ENCODE measurements at regions of chr1 and their contacts with region 1.

Region 1: DNA sequence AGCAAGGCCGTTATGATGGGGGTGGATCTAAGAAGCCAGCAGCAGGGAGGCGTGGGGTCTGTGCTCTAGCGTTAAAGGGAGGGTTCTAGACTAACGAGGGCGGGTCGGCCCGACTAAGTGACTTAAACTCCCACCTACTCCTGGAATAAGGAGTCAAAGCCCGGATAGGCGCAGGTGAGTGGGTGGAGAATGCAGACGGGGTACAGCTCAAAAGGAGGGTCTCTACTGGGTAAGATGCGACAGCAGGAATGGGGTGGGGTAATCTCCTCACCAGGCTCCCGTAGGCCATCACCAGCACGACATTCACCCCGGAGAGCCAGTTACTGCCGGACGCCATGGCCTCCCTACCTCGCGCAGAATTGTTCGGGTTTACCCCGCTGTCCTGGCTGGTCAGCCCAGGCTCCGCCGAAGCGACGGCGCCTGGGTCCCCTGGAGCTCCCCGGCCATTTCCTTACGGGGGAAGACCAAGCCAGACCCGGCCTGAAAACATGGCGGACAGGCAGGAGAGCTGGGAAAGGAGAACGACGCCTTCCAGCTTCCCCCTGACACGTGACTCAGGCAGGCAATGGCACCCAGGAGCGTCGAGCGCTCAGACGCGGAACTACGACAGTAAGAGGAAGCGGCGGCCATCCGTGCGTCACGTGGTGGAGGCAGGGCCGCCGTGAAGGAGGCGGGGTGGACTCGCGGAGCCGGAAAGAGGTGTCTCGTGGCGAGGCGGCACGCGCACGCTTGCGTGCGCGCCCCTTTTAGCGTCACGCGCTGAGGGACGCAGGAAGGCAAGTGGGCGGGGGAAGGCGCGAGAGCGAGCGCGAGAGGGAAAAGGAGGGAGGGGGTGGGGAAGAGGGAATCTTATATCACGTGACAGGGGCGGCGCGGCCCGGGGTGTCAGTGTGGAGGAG is at the start of gene UBAP2L:
- DNase-seq: peak; percentile 99
- ATAC-seq: peak; percentile 92
- H3K4me3 Mint-ChIP-seq: peak within 1 kb of the TSS; percentile 99
- H3K27ac Mint-ChIP-seq: peak within 1 kb of the TSS; percentile 100
- H3K4me1 Mint-ChIP-seq: peaks cover 70% of the 10 kb centered on the region
- H3K27me3 Mint-ChIP-seq: no peaks in the 10 kb centered on the region
- total RNA-seq, gene UBAP2L: 205 to 255 TPM

Region 2: DNA sequence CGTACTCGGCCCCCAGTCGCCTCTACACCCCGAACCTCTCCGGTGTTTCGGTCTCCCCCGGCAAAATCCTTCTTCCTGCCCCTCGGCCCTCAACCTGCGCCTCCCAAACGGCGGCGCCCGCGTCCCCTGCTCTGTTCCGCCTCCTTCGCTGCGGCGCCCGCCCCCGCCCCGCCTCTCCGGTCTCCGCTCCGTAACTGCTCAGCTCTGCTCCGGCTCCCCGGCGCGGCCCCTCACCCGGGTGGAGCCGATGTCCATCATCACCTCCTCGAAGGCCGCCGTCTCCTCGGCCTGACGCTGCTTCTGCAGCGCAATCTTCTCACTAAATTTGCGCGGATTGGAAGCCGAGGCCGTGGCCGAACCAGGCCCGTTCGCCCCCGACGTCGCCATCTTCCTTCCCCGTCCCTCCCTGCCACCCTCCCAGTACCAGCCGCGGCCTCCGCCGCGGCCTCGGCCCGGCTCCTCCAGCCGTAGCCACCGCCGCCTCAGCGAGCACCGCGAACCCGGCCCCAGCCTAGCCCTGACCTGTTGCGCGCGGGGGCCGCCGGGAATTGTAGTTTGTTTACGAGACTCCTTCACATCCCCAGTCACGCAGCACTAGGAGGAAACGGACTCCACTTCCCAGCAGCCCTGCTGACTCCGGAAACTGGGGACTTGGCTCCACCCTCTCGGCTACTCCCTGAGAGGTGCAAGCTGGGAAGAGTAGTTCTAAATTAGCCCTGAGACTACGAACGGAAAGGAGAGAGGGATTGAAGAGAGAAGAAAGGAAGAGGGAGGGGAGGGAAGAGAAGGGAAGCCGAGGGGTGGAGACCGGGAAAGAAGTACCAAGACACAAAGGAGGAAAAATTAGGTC is 262.0 kb before region 1 on chr1 and contains the start of gene CRTC2:
- CTCF ChIA-PET with region 1: no interaction called
- POLR2A ChIA-PET with region 1: no interaction called
- intact Hi-C with region 1: loop called in 1 of 2 experiments (anchors 1 kb)
- DNase-seq: peak; percentile 99
- ATAC-seq: peak; percentile 90
- H3K4me3 Mint-ChIP-seq: peak within 1 kb of the TSS; percentile 99
- H3K27ac Mint-ChIP-seq: peak within 1 kb of the TSS; percentile 95
- H3K4me1 Mint-ChIP-seq: peaks cover 55% of the 10 kb centered on the region
- H3K27me3 Mint-ChIP-seq: no peaks in the 10 kb centered on the region
- total RNA-seq, gene CRTC2: 60.6 to 80.4 TPM

Region 3: DNA sequence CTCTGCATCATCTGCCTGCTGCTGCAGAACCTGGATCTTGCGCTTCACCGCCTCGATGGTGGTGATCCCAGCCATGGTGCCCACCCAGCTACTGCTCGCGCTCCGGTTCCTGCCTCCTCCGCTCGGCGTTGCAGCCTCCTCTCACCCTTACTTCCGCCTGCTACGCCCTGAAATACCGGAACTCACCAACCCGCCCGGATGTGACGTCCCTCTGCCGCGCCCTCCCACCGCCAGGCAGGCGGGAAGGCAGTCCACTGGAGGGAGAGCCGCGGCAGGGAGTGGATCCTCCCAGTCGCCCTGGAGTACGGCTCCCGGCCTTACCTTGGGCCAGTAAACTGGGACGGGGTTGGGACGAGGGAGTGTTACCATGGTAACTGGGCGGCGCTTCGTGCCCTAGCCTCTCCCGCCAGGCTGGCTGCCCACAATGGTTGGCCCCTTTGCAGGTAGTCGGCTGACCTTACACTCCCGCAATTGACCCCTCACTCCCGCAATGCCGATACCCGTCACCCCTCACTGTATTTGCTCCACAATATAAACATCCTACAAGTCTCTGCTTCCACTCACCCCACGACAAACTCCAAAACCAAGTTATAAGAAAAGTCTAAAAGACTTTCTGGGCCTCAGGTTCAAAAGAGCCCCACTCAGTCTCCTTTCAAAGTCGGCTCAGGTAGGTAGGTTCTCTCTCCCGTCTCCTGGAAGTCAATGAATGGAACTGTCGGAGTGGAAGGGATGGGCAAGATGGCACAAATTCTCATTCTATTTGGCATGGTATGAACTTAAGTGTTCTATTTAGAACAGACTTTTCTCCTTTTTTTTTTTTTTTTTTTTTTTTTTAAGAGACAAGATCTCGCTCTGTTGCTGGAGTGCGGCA is 37.0 kb before region 1 on chr1:
- CTCF ChIA-PET with region 1: interaction called, 5 read pairs
- POLR2A ChIA-PET with region 1: interaction called, 3 read pairs
- intact Hi-C with region 1: loop called (anchors 1 kb)
- DNase-seq: peak; percentile 98
- ATAC-seq: peak; percentile 72
- H3K4me3 Mint-ChIP-seq: peak overlapping the region; percentile 99
- H3K27ac Mint-ChIP-seq: peak overlapping the region; percentile 100
- H3K4me1 Mint-ChIP-seq: peaks cover 39% of the 10 kb centered on the region
- H3K27me3 Mint-ChIP-seq: no peaks in the 10 kb centered on the region

Region 4: GRCh38 chr1:154272217-154272998 is 52.1 kb after region 1 on chr1 and contains the start of gene HAX1:
- CTCF ChIA-PET with region 1: interaction called, 6 read pairs
- POLR2A ChIA-PET with region 1: interaction called, 3 read pairs
- intact Hi-C with region 1: loop called (anchors 1 kb)
- DNase-seq: peak; percentile 99
- ATAC-seq: peak; percentile 95
- H3K4me3 Mint-ChIP-seq: peak within 1 kb of the TSS; percentile 99
- H3K27ac Mint-ChIP-seq: peak within 1 kb of the TSS; percentile 99
- H3K4me1 Mint-ChIP-seq: peaks cover 37% of the 10 kb centered on the region
- H3K27me3 Mint-ChIP-seq: no peaks in the 10 kb centered on the region
- total RNA-seq, gene HAX1: 177 to 225 TPM

Region 5: GRCh38 chr1:154974063-154974807 is 753.9 kb after region 1 on chr1 and contains the start of gene CKS1B:
- CTCF ChIA-PET with region 1: no interaction called
- POLR2A ChIA-PET with region 1: no interaction called
- intact Hi-C with region 1: loop called in 1 of 2 experiments (anchors 1 kb)
- DNase-seq: peak; percentile 98
- ATAC-seq: peak; percentile 86
- H3K4me3 Mint-ChIP-seq: no peak within 1 kb of the TSS
- H3K27ac Mint-ChIP-seq: no peak within 1 kb of the TSS
- H3K4me1 Mint-ChIP-seq: peaks cover 30% of the 10 kb centered on the region
- H3K27me3 Mint-ChIP-seq: no peaks in the 10 kb centered on the region
- total RNA-seq, gene CKS1B: 190 to 196 TPM